H1 (cell line): ENCODE measurements at regions of chr1 and their contacts with region 1.

Region 1: GRCh38 chr1:26145041-26145959 is 13.6 kb upstream of the FAM110D start:
- DNase-seq: peak in 1 of 2 experiments; percentile 85
- H3K4me3 ChIP-seq: no peak overlapping the region
- H3K27ac ChIP-seq: no peak overlapping the region
- H3K4me1 ChIP-seq: no peaks in the 10 kb centered on the region
- H3K27me3 ChIP-seq: peaks cover 0 to 10% (median 4%) of the 10 kb centered on the region in 4 experiments; a peak in 4 of 7 replicates
- CTCF ChIP-seq: peak; percentile 49 to 86 (median 79)
- EP300 ChIP-seq: no peak
- POLR2A ChIP-seq: no peak
- RAD21 ChIP-seq: peak; percentile 86 to 91

Region 2: GRCh38 chr1:26045722-26046248 is 99.5 kb before region 1 on chr1 and contains the start of gene SLC30A2:
- CTCF ChIA-PET with region 1: interaction called, 29 read pairs
- POLR2A ChIA-PET with region 1: interaction called, 3 read pairs
- DNase-seq: peak in 1 of 2 experiments; percentile 74
- H3K4me3 ChIP-seq: peak within 1 kb of the TSS; percentile 4 to 67 (median 30)
- H3K27ac ChIP-seq: no peak within 1 kb of the TSS
- H3K4me1 ChIP-seq: peaks cover 0 to 8% (median 5%) of the 10 kb centered on the region in 4 experiments; a peak in 3 of 7 replicates
- H3K27me3 ChIP-seq: peaks cover 31 to 74% (median 60%) of the 10 kb centered on the region in 4 experiments
- CTCF ChIP-seq: no peak
- EP300 ChIP-seq: no peak
- POLR2A ChIP-seq: no peak
- RAD21 ChIP-seq: no peak
- total RNA-seq, gene SLC30A2: 0.19 TPM in 1 of 2 replicates, not detected in the other

Region 3: GRCh38 chr1:26060832-26061574 is 84.3 kb before region 1 on chr1:
- CTCF ChIA-PET with region 1: interaction called, 11 read pairs
- POLR2A ChIA-PET with region 1: no interaction called
- DNase-seq: no peak
- H3K4me3 ChIP-seq: no peak overlapping the region
- H3K27ac ChIP-seq: no peak overlapping the region
- H3K4me1 ChIP-seq: no peaks in the 10 kb centered on the region
- H3K27me3 ChIP-seq: peaks cover 0 to 2% (median 0%) of the 10 kb centered on the region in 4 experiments; a peak in 2 of 7 replicates
- CTCF ChIP-seq: no peak
- EP300 ChIP-seq: no peak
- POLR2A ChIP-seq: no peak
- RAD21 ChIP-seq: no peak

Region 4: DNA sequence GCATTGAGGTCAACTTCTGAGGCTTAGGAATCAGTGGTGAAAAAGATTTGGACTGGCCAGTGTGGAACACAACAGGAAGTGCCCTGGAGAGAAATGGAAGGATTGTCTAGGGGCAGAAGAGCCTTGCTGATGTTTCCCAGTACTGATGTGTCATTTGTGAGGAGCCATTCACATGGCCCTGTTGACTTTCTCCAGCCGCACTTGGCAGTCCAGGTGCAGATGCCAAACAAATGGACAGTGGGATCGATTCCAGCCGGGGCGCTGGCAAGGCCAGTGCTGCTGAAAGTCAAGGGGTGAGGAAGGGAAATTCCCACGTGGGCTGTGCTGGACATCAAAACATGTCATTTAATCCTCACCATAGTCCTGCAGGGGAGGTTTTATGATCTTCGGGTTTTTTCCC is 73.0 kb before region 1 on chr1:
- CTCF ChIA-PET with region 1: no interaction called
- POLR2A ChIA-PET with region 1: no interaction called
- DNase-seq: no peak
- H3K4me3 ChIP-seq: no peak overlapping the region
- H3K27ac ChIP-seq: no peak overlapping the region
- H3K4me1 ChIP-seq: no peaks in the 10 kb centered on the region
- H3K27me3 ChIP-seq: no peaks in the 10 kb centered on the region
- CTCF ChIP-seq: no peak
- EP300 ChIP-seq: no peak
- POLR2A ChIP-seq: no peak
- RAD21 ChIP-seq: no peak

Region 5: DNA sequence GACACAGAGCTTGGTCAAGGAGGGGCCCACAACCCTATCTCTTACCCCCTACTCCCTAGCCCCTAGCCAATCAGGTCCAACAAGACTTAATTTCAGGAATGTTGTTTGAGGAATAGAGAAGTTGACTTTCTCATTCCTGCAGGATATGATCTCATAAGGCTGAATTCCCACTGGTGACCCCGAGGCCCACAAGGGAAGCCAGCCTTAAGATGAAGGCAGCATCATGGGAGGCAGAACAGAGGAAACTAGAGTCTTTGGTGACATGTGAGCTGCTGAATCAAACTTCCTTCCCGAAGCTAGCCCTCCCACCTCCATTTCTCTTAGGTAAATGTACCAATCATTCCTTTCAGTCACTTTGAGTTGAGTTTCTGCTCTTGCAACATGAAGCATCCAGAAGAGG is 42.8 kb before region 1 on chr1:
- CTCF ChIA-PET with region 1: interaction called, 154 read pairs
- POLR2A ChIA-PET with region 1: interaction called, 7 read pairs
- DNase-seq: no peak
- H3K4me3 ChIP-seq: no peak overlapping the region
- H3K27ac ChIP-seq: no peak overlapping the region
- H3K4me1 ChIP-seq: no peaks in the 10 kb centered on the region
- H3K27me3 ChIP-seq: no peaks in the 10 kb centered on the region; a peak in 2 of 7 replicates
- CTCF ChIP-seq: no peak
- EP300 ChIP-seq: no peak
- POLR2A ChIP-seq: no peak
- RAD21 ChIP-seq: no peak

Region 6: DNA sequence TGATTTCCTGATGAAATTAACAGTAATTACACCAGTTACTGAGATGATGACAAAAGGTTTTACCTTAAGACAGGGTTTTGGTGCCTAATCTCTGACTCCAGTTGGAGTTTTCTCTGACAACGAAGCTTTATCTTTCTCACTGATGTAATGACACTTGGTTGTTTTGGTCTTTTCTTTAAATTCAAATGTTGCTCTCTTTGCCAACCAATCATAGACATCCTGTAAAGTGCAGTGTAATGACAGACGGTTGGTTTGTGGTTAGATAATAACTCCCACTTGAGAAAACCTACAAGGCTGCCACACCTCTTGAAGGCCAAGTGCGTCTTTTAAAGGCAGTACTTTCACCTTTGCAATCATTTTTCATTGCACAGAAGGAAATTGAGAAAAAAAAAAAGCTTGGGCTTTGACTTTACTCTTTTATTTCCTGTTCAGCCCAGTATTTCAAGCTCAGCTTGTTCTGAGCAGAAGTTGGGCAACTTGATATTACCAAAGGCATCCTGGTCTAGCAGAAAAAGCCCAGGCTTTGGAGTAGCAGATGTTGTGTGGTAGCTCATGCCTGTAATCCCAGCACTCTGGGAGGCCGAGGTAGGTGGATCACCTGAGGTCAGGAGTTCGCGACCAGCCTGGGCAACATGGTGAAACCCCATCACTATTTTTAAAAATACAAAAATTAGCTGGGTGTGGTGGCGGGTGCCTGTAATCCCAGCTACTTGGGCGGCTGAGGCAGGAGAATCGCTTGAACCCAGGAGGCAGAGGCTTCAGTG is 18.8 kb before region 1 on chr1:
- CTCF ChIA-PET with region 1: interaction called, 44 read pairs
- POLR2A ChIA-PET with region 1: no interaction called
- DNase-seq: peak in 1 of 2 experiments; percentile 26
- H3K4me3 ChIP-seq: no peak overlapping the region
- H3K27ac ChIP-seq: no peak overlapping the region
- H3K4me1 ChIP-seq: no peaks in the 10 kb centered on the region
- H3K27me3 ChIP-seq: no peaks in the 10 kb centered on the region
- CTCF ChIP-seq: no peak
- EP300 ChIP-seq: no peak
- POLR2A ChIP-seq: no peak
- RAD21 ChIP-seq: no peak

Region 7: GRCh38 chr1:26161415-26162219 is 16.3 kb after region 1 on chr1:
- CTCF ChIA-PET with region 1: interaction called, 47 read pairs
- POLR2A ChIA-PET with region 1: interaction called, 3 read pairs
- DNase-seq: peak in 1 of 2 experiments; percentile 84
- H3K4me3 ChIP-seq: peak overlapping the region; percentile 11 to 66 (median 48)
- H3K27ac ChIP-seq: no peak overlapping the region
- H3K4me1 ChIP-seq: peaks cover 10 to 47% (median 21%) of the 10 kb centered on the region in 4 experiments
- H3K27me3 ChIP-seq: peaks cover 35 to 78% (median 71%) of the 10 kb centered on the region in 4 experiments
- CTCF ChIP-seq: 0 out of 4 replicates have a peak, but pooled peaks of 1 of the 3 experiments have one; percentile 2
- EP300 ChIP-seq: no peak
- POLR2A ChIP-seq: 0 out of 3 replicates have a peak, but pooled peaks of 1 of the 2 experiments have one; percentile 40
- RAD21 ChIP-seq: no peak

Region 8: GRCh38 chr1:26169669-26170471 is 24.6 kb after region 1 on chr1 and contains the start of gene ZNF593:
- CTCF ChIA-PET with region 1: interaction called, 16 read pairs
- POLR2A ChIA-PET with region 1: no interaction called
- DNase-seq: peak; percentile 78 to 96
- H3K4me3 ChIP-seq: peak within 1 kb of the TSS; percentile 71 to 79 (median 74)
- H3K27ac ChIP-seq: peak within 1 kb of the TSS; percentile 23; the same call in 1 of the 2 replicates
- H3K4me1 ChIP-seq: peaks cover 5 to 18% (median 13%) of the 10 kb centered on the region in 4 experiments
- H3K27me3 ChIP-seq: peaks cover 0 to 11% (median 6%) of the 10 kb centered on the region in 4 experiments; a peak in 6 of 7 replicates
- CTCF ChIP-seq: peak in 2 of 3 experiments; percentile 84 to 96; a peak in 3 of 4 replicates
- EP300 ChIP-seq: no peak; a peak in 1 of 3 replicates
- POLR2A ChIP-seq: peak in 1 of 2 experiments; percentile 86; a peak in 2 of 3 replicates
- RAD21 ChIP-seq: peak; percentile 17 to 41; a peak in 2 of 4 replicates
- total RNA-seq, gene ZNF593: 38.2 and 40.2 TPM in 2 replicates

Region 9: GRCh38 chr1:26239936-26240335 is 94.6 kb after region 1 on chr1:
- CTCF ChIA-PET with region 1: no interaction called
- POLR2A ChIA-PET with region 1: no interaction called
- DNase-seq: no peak
- H3K4me3 ChIP-seq: no peak overlapping the region
- H3K27ac ChIP-seq: no peak overlapping the region
- H3K4me1 ChIP-seq: peaks cover 0 to 4% (median 1%) of the 10 kb centered on the region in 4 experiments; a peak in 4 of 7 replicates
- H3K27me3 ChIP-seq: no peaks in the 10 kb centered on the region
- CTCF ChIP-seq: no peak
- EP300 ChIP-seq: no peak
- POLR2A ChIP-seq: no peak
- RAD21 ChIP-seq: no peak

Region 10: GRCh38 chr1:26317612-26318337 is 172.5 kb after region 1 on chr1 and contains the start of gene CD52:
- CTCF ChIA-PET with region 1: no interaction called
- POLR2A ChIA-PET with region 1: no interaction called
- DNase-seq: no peak
- H3K4me3 ChIP-seq: no peak within 1 kb of the TSS; a peak in 1 of 8 replicates
- H3K27ac ChIP-seq: no peak within 1 kb of the TSS
- H3K4me1 ChIP-seq: peaks cover 4 to 16% (median 8%) of the 10 kb centered on the region in 4 experiments
- H3K27me3 ChIP-seq: no peaks in the 10 kb centered on the region
- CTCF ChIP-seq: no peak
- EP300 ChIP-seq: no peak
- POLR2A ChIP-seq: no peak
- RAD21 ChIP-seq: no peak
- total RNA-seq, gene CD52: 2.4 TPM in 1 of 2 replicates, not detected in the other